ENCODE measurements at regions of chr16 and their contacts with region 1.

Region 1: GRCh38 chr16:67883872-67884261 is 818 bp upstream of the NRN1L start:
- DNase-seq: peak; percentile 76
- ATAC-seq: peak; percentile 81
- H3K4me3 Mint-ChIP-seq: no peak overlapping the region
- H3K27ac Mint-ChIP-seq: no peak overlapping the region
- H3K4me1 Mint-ChIP-seq: no peaks in the 10 kb centered on the region
- H3K27me3 Mint-ChIP-seq: no peaks in the 10 kb centered on the region

Region 2: GRCh38 chr16:67841764-67842508 is 41.9 kb before region 1 on chr16 and contains the start of gene THAP11:
- CTCF ChIA-PET with region 1: interaction called, 11 read pairs
- POLR2A ChIA-PET with region 1: interaction called, 3 read pairs
- DNase-seq: peak; percentile 97
- ATAC-seq: peak; percentile 59
- H3K4me3 Mint-ChIP-seq: peak within 1 kb of the TSS; percentile 96
- H3K27ac Mint-ChIP-seq: peak within 1 kb of the TSS; percentile 98
- H3K4me1 Mint-ChIP-seq: peaks cover 38% of the 10 kb centered on the region
- H3K27me3 Mint-ChIP-seq: no peaks in the 10 kb centered on the region
- total RNA-seq, gene THAP11: 50.2 to 52.4 TPM

Region 3: DNA sequence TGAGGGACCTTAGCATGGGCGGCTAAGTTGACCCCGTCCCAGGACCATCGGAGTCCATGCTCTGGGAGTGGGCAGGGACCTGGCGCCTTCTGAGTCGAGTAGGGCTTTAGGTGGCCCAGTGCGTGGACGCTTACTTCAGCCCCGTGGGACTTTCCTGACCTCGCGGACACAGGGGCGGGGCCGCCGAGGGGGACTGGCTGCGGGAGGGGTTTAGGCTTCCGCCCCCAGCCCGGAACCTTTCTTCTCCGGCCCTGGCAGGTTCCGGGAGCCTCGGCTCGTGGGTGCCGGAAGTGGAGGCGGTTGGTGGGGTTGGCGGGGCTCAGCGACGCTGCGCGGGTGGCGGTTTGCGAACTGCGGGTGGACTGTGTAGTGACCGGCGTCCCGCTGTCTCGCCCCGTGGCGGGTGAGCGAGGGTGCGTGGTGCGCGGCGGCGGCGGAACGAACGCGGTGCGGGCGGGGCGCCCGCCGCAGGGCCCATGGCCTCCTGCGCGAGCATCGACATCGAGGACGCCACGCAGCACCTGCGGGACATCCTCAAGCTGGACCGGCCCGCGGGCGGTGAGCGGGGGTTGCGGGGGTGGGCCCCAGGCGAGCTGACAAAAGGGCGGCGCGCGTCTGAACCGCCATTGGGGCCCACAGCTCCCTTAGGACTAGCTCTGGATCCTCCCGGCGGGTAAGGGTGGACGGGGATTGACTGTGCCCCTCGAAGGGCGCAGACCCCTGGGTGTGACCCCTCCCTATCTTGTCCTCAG is 10.9 kb before region 1 on chr16 and contains the start of gene EDC4:
- CTCF ChIA-PET with region 1: interaction called, 28 read pairs
- POLR2A ChIA-PET with region 1: interaction called, 4 read pairs
- DNase-seq: peak; percentile 88
- ATAC-seq: peak; percentile 91
- H3K4me3 Mint-ChIP-seq: peak within 1 kb of the TSS; percentile 89
- H3K27ac Mint-ChIP-seq: peak within 1 kb of the TSS; percentile 92
- H3K4me1 Mint-ChIP-seq: peaks cover 31% of the 10 kb centered on the region
- H3K27me3 Mint-ChIP-seq: no peaks in the 10 kb centered on the region
- total RNA-seq, gene EDC4: 111 to 113 TPM

Region 4: GRCh38 chr16:67917852-67918236 is 34.0 kb after region 1 on chr16:
- CTCF ChIA-PET with region 1: interaction called, 20 read pairs
- POLR2A ChIA-PET with region 1: interaction called, 4 read pairs
- DNase-seq: peak; percentile 40
- ATAC-seq: peak; percentile 71
- H3K4me3 Mint-ChIP-seq: no peak overlapping the region
- H3K27ac Mint-ChIP-seq: peak overlapping the region; percentile 53
- H3K4me1 Mint-ChIP-seq: peaks cover 24% of the 10 kb centered on the region
- H3K27me3 Mint-ChIP-seq: no peaks in the 10 kb centered on the region

Region 5: DNA sequence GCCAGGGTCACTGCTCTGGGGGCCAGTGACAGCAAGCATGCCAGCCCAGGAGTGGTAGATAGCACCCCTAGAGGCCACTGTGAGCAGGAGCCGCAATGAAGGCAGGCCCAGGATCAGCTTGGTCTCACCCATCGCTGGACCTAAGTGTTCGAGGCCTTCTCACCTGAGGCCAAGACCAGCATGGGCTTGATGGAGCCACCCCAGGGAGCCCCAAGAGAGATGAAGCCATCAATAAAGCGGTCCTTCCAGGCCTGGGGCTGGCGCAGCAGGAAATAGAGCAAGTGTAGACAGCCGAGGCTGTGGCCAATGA is 58.3 kb after region 1 on chr16:
- CTCF ChIA-PET with region 1: interaction called, 12 read pairs
- POLR2A ChIA-PET with region 1: interaction called, 3 read pairs
- DNase-seq: peak; percentile 54
- ATAC-seq: peak; percentile 44
- H3K4me3 Mint-ChIP-seq: no peak overlapping the region
- H3K27ac Mint-ChIP-seq: peak overlapping the region; percentile 17
- H3K4me1 Mint-ChIP-seq: peaks cover 36% of the 10 kb centered on the region
- H3K27me3 Mint-ChIP-seq: no peaks in the 10 kb centered on the region

Measured in activated CD8-positive, alpha-beta T cell treated with anti-CD3 and anti-CD28 coated beads, Interleukin-2, amount 10 ng/mL, durations not matched to agents 7 days and 5 days (primary cell).